A673 (cell line): ENCODE measurements at regions of chr5 and their contacts with region 1.

Region 1: GRCh38 chr5:150428106-150428876 is 15.6 kb upstream of the CD74 start:
- DNase-seq: no peak
- H3K4me3 ChIP-seq: no peak overlapping the region
- H3K27ac ChIP-seq: no peak overlapping the region
- H3K4me1 ChIP-seq: no peaks in the 10 kb centered on the region
- H3K27me3 ChIP-seq: no peaks in the 10 kb centered on the region
- CTCF ChIP-seq: no peak

Region 2: GRCh38 chr5:150318613-150319483 is 109.4 kb before region 1 on chr5:
- CTCF ChIA-PET with region 1: no interaction called
- POLR2A ChIA-PET with region 1: interaction called, 11 read pairs
- intact Hi-C with region 1: no loop called
- DNase-seq: no peak
- H3K4me3 ChIP-seq: no peak overlapping the region
- H3K27ac ChIP-seq: no peak overlapping the region
- H3K4me1 ChIP-seq: no peaks in the 10 kb centered on the region
- H3K27me3 ChIP-seq: no peaks in the 10 kb centered on the region
- CTCF ChIP-seq: no peak

Region 3: GRCh38 chr5:150458819-150459557 is 30.7 kb after region 1 on chr5:
- CTCF ChIA-PET with region 1: no interaction called
- POLR2A ChIA-PET with region 1: no interaction called
- intact Hi-C with region 1: no loop called
- DNase-seq: peak; percentile 86
- H3K4me3 ChIP-seq: peak overlapping the region; percentile 27
- H3K27ac ChIP-seq: no peak overlapping the region
- H3K4me1 ChIP-seq: no peaks in the 10 kb centered on the region
- H3K27me3 ChIP-seq: no peaks in the 10 kb centered on the region
- CTCF ChIP-seq: peak; percentile 74